IMR-90 (cell line): ENCODE measurements at regions of chr3 and their contacts with region 1.

Region 1: GRCh38 chr3:86990734-86991481 is at the start of gene VGLL3:
- DNase-seq: peak; percentile 87
- ATAC-seq: peak; percentile 85
- H3K4me3 ChIP-seq: peak within 1 kb of the TSS; percentile 99
- H3K27ac ChIP-seq: peak within 1 kb of the TSS; percentile 97
- H3K4me1 ChIP-seq: peaks cover 6% of the 10 kb centered on the region
- H3K27me3 ChIP-seq: no peaks in the 10 kb centered on the region
- CTCF ChIP-seq: peak; percentile 25
- POLR2A ChIP-seq: peak; percentile 92
- RAD21 ChIP-seq: no peak
- total RNA-seq, gene VGLL3: 96.7 and 97.3 TPM in 2 replicates

Region 2: DNA sequence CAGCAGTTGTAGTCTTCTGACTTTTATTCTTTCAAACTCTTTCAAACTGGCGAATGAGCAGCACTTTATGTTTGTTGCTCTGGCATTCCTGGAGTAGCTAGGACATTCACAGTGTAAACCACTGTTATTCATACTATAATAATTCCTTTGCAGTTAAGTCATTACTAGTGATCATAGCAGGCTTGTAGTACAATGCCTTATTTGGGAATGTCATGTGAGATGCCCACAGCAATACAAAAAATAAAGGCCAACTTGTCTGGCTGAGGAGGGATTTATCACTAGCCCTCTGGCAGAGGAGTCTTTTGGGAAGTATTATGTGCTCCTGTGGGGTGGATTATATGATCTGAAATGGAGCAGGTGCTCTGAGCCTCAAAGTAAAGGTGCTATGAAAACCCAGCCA is 197.1 kb before region 1 on chr3:
- CTCF ChIA-PET with region 1: no interaction called
- POLR2A ChIA-PET with region 1: interaction called, 7 read pairs
- dilution Hi-C with region 1: no loop called
- in situ Hi-C with region 1: no loop called
- intact Hi-C with region 1: loop called (anchors 1 kb)
- DNase-seq: peak; percentile 97
- ATAC-seq: peak; percentile 95
- H3K4me3 ChIP-seq: no peak overlapping the region
- H3K27ac ChIP-seq: peak overlapping the region; percentile 85; the same call in 1 of the 2 replicates
- H3K4me1 ChIP-seq: peaks cover 5% of the 10 kb centered on the region; the same call in 1 of the 2 replicates
- H3K27me3 ChIP-seq: no peaks in the 10 kb centered on the region
- CTCF ChIP-seq: no peak
- POLR2A ChIP-seq: peak; percentile 69
- RAD21 ChIP-seq: no peak

Region 3: GRCh38 chr3:87307803-87308202 is 316.9 kb after region 1 on chr3:
- CTCF ChIA-PET with region 1: no interaction called
- POLR2A ChIA-PET with region 1: no interaction called
- dilution Hi-C with region 1: no loop called
- in situ Hi-C with region 1: no loop called
- intact Hi-C with region 1: no loop called
- DNase-seq: no peak
- ATAC-seq: no peak
- H3K4me3 ChIP-seq: no peak overlapping the region
- H3K27ac ChIP-seq: no peak overlapping the region
- H3K4me1 ChIP-seq: no peaks in the 10 kb centered on the region
- H3K27me3 ChIP-seq: peaks cover 2% of the 10 kb centered on the region; the same call in 1 of the 2 replicates
- CTCF ChIP-seq: peak; percentile 26
- POLR2A ChIP-seq: no peak
- RAD21 ChIP-seq: no peak

Region 4: DNA sequence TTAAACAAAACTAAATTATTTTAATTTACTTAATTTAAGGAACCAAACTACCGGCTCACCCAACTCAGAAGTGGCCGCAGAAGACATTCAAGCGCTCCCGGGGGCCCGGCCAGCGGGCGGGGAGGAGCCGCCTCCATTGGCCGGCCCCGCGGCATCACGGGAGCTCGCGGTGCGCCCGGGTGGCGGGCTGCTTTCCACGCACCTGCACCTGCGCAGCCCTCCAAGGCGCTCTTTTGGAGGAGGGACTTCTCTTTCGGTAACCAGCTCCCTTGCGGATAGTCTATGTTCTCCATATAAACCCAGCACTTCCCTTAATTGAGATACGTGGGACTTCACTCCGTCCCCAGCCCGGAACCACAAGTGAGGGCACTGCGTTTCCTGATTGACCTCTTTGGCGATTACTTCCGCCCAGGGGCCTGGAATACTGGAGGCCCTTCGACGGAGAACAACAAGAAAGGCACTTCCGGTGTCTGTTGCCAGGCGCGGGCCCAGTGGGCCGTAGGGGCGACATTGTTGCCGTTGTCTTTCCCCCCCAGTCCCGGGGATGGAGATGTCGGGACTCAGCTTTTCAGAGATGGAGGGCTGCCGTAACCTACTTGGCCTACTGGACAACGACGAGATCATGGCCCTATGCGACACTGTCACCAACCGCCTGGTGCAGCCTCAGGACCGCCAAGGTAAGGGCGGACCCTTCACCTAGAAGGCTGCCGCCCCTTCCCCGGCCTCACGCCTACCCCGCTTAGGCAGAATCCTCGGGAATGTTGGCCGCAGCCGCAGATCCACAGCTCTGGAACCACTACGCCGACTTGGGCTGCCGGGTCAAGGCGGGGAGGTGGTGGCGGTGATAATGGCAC is 1158.8 kb after region 1 on chr3 and contains the start of gene C3orf38:
- CTCF ChIA-PET with region 1: no interaction called
- POLR2A ChIA-PET with region 1: no interaction called
- dilution Hi-C with region 1: no loop called
- in situ Hi-C with region 1: loop called (anchors 25 kb)
- intact Hi-C with region 1: no loop called
- DNase-seq: peak; percentile 89
- ATAC-seq: peak; percentile 94
- H3K4me3 ChIP-seq: peak within 1 kb of the TSS; percentile 99
- H3K27ac ChIP-seq: peak within 1 kb of the TSS; percentile 90
- H3K4me1 ChIP-seq: no peaks in the 10 kb centered on the region
- H3K27me3 ChIP-seq: no peaks in the 10 kb centered on the region
- CTCF ChIP-seq: no peak
- POLR2A ChIP-seq: no peak; the same call in 1 of the 2 replicates
- RAD21 ChIP-seq: no peak
- total RNA-seq, gene C3orf38: 16.7 and 27.8 TPM in 2 replicates